ENCODE measurements at regions of chr11 and their contacts with region 1.

Region 1: GRCh38 chr11:47766305-47767227 is 575 bp downstream of the FNBP4 start:
- DNase-seq: peak in 1 of 2 donors; percentile 83
- H3K4me3 ChIP-seq: peak overlapping the region; percentile 80 to 87
- H3K27ac ChIP-seq: peak overlapping the region; percentile 96 to 99
- H3K4me1 ChIP-seq: peaks cover 0 to 15% of the 10 kb centered on the region in 2 donors
- H3K27me3 ChIP-seq: no peaks in the 10 kb centered on the region
- CTCF ChIP-seq: no peak

Region 2: GRCh38 chr11:47578524-47579460 is 187.8 kb before region 1 on chr11 and contains the starts of genes KBTBD4 and NDUFS3:
- intact Hi-C with region 1: loop called (anchors 5 kb)
- DNase-seq: peak; percentile 57 to 92
- H3K4me3 ChIP-seq: peak within 1 kb of the TSS; percentile 74 to 93
- H3K27ac ChIP-seq: peak within 1 kb of the TSS; percentile 75 to 83
- H3K4me1 ChIP-seq: peaks cover 14 to 15% of the 10 kb centered on the region in 2 donors
- H3K27me3 ChIP-seq: no peaks in the 10 kb centered on the region
- CTCF ChIP-seq: no peak
- total RNA-seq, gene KBTBD4: 14.8 TPM
- total RNA-seq, gene NDUFS3: 19.9 TPM

Region 3: DNA sequence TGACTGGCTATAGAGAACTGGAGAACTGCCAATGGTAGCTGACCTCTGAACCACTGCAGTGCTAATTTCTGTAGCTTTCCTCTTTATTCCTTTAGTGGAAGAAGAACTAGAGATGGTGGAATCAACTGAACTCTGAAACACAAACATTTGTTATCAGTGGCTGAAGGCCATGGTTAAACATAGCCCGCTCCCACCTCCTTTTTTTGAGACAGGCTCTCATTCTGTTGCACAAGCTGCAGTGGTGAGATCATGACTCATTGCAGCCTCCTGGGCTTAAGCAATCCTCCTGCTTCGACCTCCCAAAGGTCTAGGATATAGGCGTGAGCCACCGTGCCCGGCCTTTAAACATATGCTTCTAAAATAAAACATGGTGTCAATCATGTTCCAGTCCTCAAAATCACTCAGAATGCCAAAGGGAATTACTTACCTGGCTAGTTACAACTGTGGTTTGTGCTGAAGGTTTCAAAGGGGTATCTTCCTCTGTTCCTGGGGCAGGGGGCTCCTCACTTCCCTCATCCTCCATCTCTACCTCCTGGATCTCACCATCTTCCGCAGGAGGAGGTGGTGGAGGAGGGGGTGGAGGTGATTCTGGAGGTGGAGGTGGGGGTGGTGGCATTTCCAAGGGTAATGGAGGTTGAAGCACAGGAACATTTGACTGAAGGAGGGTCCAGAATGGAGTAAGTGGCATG is 42.4 kb before region 1 on chr11:
- intact Hi-C with region 1: loop called (anchors 5 kb)
- DNase-seq: peak in 1 of 2 donors; percentile 76
- H3K4me3 ChIP-seq: no peak overlapping the region
- H3K27ac ChIP-seq: peak overlapping the region; percentile 30 to 73
- H3K4me1 ChIP-seq: peaks cover 0 to 4% of the 10 kb centered on the region in 2 donors
- H3K27me3 ChIP-seq: no peaks in the 10 kb centered on the region
- CTCF ChIP-seq: no peak

Region 4: GRCh38 chr11:47932544-47932943 is 166.0 kb after region 1 on chr11:
- intact Hi-C with region 1: loop called (anchors 10 kb)
- DNase-seq: no peak
- H3K4me3 ChIP-seq: no peak overlapping the region
- H3K27ac ChIP-seq: peak overlapping the region in 1 of 2 donors; percentile 56
- H3K4me1 ChIP-seq: no peaks in the 10 kb centered on the region
- H3K27me3 ChIP-seq: no peaks in the 10 kb centered on the region
- CTCF ChIP-seq: no peak

Region 5: DNA sequence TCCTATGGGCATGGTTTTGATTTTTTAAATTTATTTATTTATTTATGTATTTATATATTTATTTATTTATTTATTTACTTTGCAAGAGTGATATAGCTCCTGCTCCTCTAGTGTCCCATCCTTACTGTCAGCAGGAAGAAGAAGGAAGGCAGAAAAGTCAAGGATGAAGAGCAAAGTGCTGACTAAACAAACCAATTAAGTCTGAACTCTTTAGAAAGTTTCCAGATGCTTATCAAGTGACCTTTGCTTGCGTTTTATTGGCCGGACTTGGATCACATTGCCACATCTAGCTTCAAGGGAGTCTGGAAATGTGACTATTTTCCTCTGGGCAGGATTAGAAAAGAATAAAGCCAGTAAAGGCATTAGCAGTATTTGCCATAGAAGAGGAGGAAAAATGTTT is 441.3 kb after region 1 on chr11:
- intact Hi-C with region 1: no loop called
- DNase-seq: no peak
- H3K4me3 ChIP-seq: no peak overlapping the region
- H3K27ac ChIP-seq: no peak overlapping the region
- H3K4me1 ChIP-seq: no peaks in the 10 kb centered on the region
- H3K27me3 ChIP-seq: no peaks in the 10 kb centered on the region
- CTCF ChIP-seq: no peak

Region 6: GRCh38 chr11:48669146-48669545 is 902.6 kb after region 1 on chr11:
- intact Hi-C with region 1: no loop called
- DNase-seq: no peak
- H3K4me3 ChIP-seq: no peak overlapping the region
- H3K27ac ChIP-seq: no peak overlapping the region
- H3K4me1 ChIP-seq: no peaks in the 10 kb centered on the region
- H3K27me3 ChIP-seq: no peaks in the 10 kb centered on the region
- CTCF ChIP-seq: no peak